ENCODE measurements at regions of chr9 and their contacts with region 1.

Region 1: DNA sequence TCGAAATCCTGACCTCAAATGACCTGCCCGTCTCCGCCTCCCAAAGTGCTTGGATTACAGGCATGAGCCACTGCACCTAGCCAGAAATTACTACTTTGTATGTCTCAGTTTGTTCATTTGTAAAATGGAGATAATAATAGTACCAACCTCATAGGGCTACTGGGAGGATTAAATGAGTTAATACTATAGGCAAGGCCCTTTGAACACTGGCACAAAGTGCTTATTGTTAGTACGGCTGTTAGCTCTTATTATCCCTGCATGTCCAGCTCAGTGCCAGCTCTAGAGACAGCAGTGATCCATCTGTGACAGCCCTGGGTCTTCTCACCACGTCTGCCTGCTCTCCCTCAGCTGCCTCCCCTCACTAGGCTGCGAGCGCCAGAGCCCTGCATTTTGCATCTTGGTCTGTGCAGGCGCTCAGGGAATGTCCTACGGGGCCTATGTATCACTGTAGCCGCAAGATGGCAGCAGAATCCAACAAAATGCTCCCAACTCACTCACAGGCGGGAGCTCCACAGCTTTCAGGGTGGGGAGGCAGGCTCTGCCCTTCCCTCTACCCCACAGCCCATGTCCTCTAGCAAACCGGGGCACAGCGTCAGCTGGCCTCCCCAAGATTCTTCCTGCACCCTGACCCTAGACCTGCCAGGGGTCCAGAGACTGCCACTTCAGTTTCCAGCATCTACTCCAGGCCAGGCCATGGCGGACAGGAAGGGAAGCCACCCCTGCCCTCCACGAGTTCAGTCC is 17.7 kb upstream of the AKNA start:
- DNase-seq: peak; percentile 87
- ATAC-seq: peak; percentile 92

Region 2: DNA sequence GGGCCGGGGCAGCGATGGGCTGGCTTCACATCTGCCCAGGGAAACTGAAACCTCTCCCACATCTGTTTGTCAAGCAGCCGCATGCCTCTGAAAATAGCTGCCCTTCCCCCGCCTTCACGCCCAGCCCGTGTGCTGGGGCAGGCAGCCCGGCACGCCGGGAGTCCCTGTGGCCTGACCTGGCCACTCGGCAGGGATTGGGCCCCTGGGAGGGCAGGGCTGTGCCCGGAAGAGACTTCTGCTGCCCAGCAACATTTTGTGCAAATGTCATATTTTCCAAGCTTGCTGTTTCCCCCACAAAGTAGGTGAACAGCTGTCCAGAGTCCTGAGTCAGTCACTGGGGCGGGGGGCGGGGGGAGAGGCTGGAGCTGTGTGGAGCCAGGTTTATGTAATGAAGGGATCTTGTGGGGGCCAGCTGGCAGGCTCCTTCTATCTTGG is 241.9 kb before region 1 on chr9:
- intact Hi-C with region 1: no loop called
- DNase-seq: no peak
- ATAC-seq: peak; percentile 82

Region 3: DNA sequence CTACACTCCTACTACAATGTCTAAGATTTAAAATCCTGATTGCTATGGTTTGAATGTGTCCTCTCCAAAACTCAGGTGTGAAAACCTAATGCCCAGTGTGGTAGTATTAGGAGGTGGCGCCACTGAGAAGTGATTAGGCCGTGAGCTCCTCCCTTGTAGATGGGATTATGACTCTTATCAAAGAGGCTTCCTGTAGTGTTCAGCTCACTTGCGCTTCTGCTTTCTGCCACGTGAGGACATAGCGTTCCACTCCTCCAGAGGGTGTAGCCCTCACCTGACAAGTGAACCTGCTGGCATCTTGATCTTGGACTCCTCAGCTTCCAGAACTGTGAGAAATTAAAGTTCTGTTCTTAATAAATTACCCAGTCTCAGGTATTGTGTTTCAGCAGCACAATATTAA is 132.8 kb after region 1 on chr9:
- intact Hi-C with region 1: no loop called
- DNase-seq: no peak
- ATAC-seq: no peak

Region 4: DNA sequence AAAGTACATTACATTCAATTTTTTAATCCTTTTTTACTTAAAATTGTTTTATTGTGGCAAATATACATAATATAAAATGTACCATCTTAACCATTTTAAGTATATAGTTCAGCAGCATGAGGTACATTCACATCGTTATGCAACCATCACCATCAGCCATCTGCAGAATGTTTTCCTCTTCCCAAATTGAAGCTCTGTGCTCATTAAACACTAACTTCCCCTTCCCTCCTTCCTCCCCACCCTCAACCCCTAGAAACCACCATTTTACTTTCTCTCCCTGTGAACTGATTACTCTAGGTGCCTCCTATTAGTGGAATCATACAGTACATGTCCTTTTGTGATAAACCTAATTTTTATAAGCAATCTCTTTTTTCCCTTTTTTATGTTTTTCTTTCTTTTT is 236.5 kb after region 1 on chr9:
- intact Hi-C with region 1: no loop called
- DNase-seq: no peak
- ATAC-seq: no peak

Region 5: GRCh38 chr9:114653556-114654159 is 248.2 kb after region 1 on chr9:
- intact Hi-C with region 1: loop called (anchors 1 kb)
- DNase-seq: no peak
- ATAC-seq: peak; percentile 65

Region 6: DNA sequence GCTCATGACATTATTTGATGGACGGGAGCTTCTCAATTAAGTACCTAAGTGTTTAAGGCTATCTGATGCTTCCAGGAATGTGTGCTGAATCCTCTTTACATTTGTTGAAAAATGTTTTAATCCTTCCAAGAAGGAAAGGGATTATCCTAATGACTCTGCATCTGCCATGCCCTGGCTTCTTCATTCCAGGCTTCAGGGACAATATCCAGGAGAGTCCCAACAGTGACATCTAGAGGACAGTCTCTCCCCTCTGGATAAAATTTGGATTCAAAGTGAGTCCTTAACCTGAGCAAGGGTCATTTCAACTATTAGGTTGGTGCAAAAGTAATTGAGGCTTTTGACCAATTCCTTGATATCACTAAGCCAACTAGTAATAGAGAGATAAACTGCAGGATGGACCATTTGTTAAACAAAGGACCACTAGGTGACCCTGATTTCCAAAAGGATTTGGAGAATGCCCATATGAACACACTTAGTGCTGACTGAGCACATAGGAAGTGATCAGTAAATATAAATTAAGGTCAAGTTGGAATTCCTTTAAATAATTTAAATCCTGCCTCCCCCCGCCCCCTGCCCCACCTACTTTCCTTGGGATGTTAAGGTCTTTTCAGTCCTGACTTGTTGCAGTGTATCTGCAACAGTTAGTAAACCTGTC is 505.8 kb after region 1 on chr9:
- intact Hi-C with region 1: loop called (anchors 5 kb)
- DNase-seq: no peak
- ATAC-seq: peak; percentile 59

Region 7: DNA sequence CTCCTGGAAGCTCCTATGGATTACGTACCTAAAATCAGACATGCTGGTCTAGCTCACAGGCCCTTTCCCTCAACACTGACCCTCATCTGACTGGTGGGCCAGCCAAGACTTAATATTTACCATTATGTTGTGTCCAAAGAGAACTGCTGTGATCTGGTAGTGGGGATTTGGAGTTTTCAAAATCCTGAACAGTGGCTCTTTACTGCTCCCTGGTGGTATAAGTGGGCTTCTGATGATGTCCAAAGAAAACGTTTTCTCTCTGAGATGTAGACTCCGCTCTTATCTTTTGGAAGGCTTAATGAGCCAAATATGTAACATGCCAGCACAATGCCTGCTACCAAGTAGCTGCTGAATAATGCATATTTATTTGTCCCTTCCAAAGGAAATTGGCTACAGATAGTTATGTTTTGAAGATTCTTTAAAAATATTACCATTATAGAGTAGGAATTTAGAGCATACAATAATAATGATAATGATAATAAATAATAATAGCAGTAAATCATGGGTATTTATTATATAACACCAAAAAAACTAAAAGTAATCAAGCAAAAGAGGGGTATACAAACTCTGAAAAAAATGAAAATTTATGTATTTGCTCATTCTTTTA is 1119.1 kb after region 1 on chr9:
- intact Hi-C with region 1: loop called (anchors 10 kb)
- DNase-seq: no peak
- ATAC-seq: no peak